Transverse colon (tissue), 4 donors: ENCODE measurements at regions of chr2 and their contacts with region 1.

Region 1: DNA sequence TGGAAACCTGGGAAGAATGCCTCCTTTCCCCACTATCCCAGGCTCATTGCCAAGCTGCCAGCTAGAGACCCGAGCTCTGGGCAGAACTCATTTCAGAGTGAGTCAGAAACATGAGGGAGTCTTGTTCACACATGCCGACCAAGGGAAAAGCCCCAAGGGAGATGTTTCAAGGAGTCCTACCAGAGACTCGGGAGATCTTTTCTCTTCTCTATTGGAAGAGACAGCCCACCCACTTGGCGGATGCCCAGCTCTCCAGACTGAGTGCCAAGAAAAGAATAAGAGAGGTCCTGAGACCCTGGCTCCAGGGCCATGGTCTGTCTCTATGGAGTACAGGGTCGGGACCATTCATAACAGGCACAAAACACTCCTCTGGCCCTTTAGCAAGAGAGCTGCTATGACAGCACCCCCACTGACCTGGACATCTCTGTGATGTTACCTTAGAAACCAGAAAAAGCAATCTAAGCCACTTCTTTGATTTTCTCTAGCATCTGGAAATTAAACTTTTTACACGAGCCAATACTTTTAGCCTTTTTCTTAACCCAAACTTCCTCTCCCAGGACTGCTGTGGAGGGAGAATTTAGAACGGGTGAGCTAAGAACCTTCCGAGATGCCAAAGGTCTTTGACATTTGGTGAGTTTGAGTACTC is 18.5 kb upstream of the IGFBP5 start:
- DNase-seq: no peak
- H3K4me3 ChIP-seq: no peak overlapping the region
- H3K27ac ChIP-seq: peak overlapping the region; percentile 0 to 29 (median 21)
- H3K4me1 ChIP-seq: peaks cover 0 to 41% (median 6%) of the 10 kb centered on the region in 4 donors
- H3K27me3 ChIP-seq: no peaks in the 10 kb centered on the region
- CTCF ChIP-seq: no peak
- EP300 ChIP-seq: no peak
- POLR2A ChIP-seq: no peak

Region 2: DNA sequence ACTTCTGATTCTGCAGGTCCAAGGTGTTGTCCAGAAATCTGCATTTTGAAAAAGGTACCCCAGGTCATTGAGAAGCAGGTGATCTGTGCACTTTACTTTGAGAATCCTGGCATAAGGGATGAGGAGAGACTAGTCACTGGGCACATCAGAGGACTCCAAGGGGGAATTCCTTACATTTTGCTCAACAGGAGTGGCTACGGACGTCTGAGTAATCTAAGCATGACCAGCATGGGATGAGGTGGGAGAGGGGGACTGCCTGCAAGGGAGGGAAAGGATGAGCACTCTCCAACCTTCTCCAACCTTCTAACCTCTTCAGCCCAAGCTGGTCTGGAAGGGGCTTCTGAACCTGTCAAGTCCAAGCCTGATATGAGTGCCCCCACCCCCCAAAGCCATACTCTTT is 397.1 kb before region 1 on chr2:
- in situ Hi-C with region 1: no loop called
- intact Hi-C with region 1: no loop called
- DNase-seq: no peak
- H3K4me3 ChIP-seq: no peak overlapping the region
- H3K27ac ChIP-seq: no peak overlapping the region
- H3K4me1 ChIP-seq: no peaks in the 10 kb centered on the region
- H3K27me3 ChIP-seq: peaks cover 18% of the 10 kb centered on the region
- CTCF ChIP-seq: no peak
- EP300 ChIP-seq: no peak
- POLR2A ChIP-seq: no peak

Region 3: GRCh38 chr2:217142649-217143266 is 428.9 kb after region 1 on chr2:
- in situ Hi-C with region 1: loop called in 1 of 4 experiments (anchors 25 kb)
- intact Hi-C with region 1: no loop called
- DNase-seq: peak; percentile 10
- H3K4me3 ChIP-seq: no peak overlapping the region
- H3K27ac ChIP-seq: no peak overlapping the region
- H3K4me1 ChIP-seq: no peaks in the 10 kb centered on the region
- H3K27me3 ChIP-seq: no peaks in the 10 kb centered on the region
- CTCF ChIP-seq: peak; percentile 19 to 50 (median 39)
- EP300 ChIP-seq: no peak
- POLR2A ChIP-seq: no peak